ENCODE measurements at regions of chr12 and their contacts with region 1.

Region 1: GRCh38 chr12:63802012-63802608 is 22.4 kb downstream of the RXYLT1 start:
- DNase-seq: peak in 3 of 14 experiments; percentile 34 to 38 (median 37)
- ATAC-seq: no peak
- H3K4me3 ChIP-seq: no peak overlapping the region
- H3K4me3 Mint-ChIP-seq: no peak overlapping the region
- H3K27ac ChIP-seq: no peak overlapping the region
- H3K27ac Mint-ChIP-seq: no peak overlapping the region
- H3K4me1 ChIP-seq: no peaks in the 10 kb centered on the region
- H3K4me1 Mint-ChIP-seq: no peaks in the 10 kb centered on the region
- H3K27me3 ChIP-seq: no peaks in the 10 kb centered on the region
- H3K27me3 Mint-ChIP-seq: no peaks in the 10 kb centered on the region
- CTCF ChIP-seq: peak; percentile 66

Region 2: GRCh38 chr12:63103494-63104131 is 698.5 kb before region 1 on chr12:
- CTCF ChIA-PET with region 1: no interaction called
- POLR2A ChIA-PET with region 1: no interaction called
- intact Hi-C with region 1: loop called (anchors 2 to 5 kb)
- DNase-seq: peak in 4 of 14 experiments; percentile 3 to 29 (median 12)
- ATAC-seq: no peak
- H3K4me3 ChIP-seq: no peak overlapping the region
- H3K4me3 Mint-ChIP-seq: no peak overlapping the region
- H3K27ac ChIP-seq: no peak overlapping the region
- H3K27ac Mint-ChIP-seq: no peak overlapping the region
- H3K4me1 ChIP-seq: no peaks in the 10 kb centered on the region
- H3K4me1 Mint-ChIP-seq: no peaks in the 10 kb centered on the region
- H3K27me3 ChIP-seq: no peaks in the 10 kb centered on the region
- H3K27me3 Mint-ChIP-seq: peaks cover 6% of the 10 kb centered on the region
- CTCF ChIP-seq: peak; percentile 82

Region 3: DNA sequence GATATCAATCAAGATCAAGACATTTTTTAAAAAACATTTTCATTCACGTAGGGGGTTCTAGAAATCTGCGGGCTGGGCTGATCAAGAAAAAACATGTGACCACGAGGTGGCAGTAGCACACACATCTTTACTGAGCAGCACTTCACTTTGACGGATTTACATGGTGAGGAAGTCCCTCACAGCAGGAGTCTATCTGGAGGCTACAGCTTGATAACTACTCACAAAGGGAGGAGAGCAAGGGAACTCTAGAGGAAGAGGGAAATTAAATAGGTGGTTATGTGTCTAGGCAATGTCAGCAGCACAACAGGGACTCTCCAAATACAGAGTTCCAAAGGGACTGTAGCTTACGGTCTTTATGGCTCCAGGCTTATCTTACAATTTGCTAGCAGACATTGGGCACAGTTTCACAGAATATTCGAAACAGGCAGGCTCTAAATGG is 381.9 kb before region 1 on chr12:
- CTCF ChIA-PET with region 1: no interaction called
- POLR2A ChIA-PET with region 1: no interaction called
- intact Hi-C with region 1: loop called in 1 of 2 experiments (anchors 5 kb)
- DNase-seq: peak in 6 of 14 experiments; percentile 1 to 49 (median 30)
- ATAC-seq: no peak
- H3K4me3 ChIP-seq: no peak overlapping the region
- H3K4me3 Mint-ChIP-seq: no peak overlapping the region
- H3K27ac ChIP-seq: no peak overlapping the region
- H3K27ac Mint-ChIP-seq: no peak overlapping the region
- H3K4me1 ChIP-seq: no peaks in the 10 kb centered on the region
- H3K4me1 Mint-ChIP-seq: no peaks in the 10 kb centered on the region
- H3K27me3 ChIP-seq: no peaks in the 10 kb centered on the region
- H3K27me3 Mint-ChIP-seq: peaks cover 7% of the 10 kb centered on the region
- CTCF ChIP-seq: no peak

Region 4: GRCh38 chr12:63668028-63668799 is 133.9 kb before region 1 on chr12 and contains the start of gene DPY19L2:
- CTCF ChIA-PET with region 1: no interaction called
- POLR2A ChIA-PET with region 1: no interaction called
- intact Hi-C with region 1: loop called (anchors 2 to 5 kb)
- DNase-seq: peak in 7 of 14 experiments; percentile 8 to 64 (median 40)
- ATAC-seq: no peak
- H3K4me3 ChIP-seq: peak within 1 kb of the TSS; percentile 59
- H3K4me3 Mint-ChIP-seq: peak within 1 kb of the TSS; percentile 51
- H3K27ac ChIP-seq: no peak within 1 kb of the TSS
- H3K27ac Mint-ChIP-seq: no peak within 1 kb of the TSS
- H3K4me1 ChIP-seq: peaks cover 11% of the 10 kb centered on the region
- H3K4me1 Mint-ChIP-seq: peaks cover 7% of the 10 kb centered on the region
- H3K27me3 ChIP-seq: peaks cover 0 to 4% of the 10 kb centered on the region in 2 experiments
- H3K27me3 Mint-ChIP-seq: peaks cover 38% of the 10 kb centered on the region
- CTCF ChIP-seq: no peak
- total RNA-seq, gene DPY19L2: not detected

Region 5: GRCh38 chr12:64430886-64431285 is 628.8 kb after region 1 on chr12:
- CTCF ChIA-PET with region 1: no interaction called
- POLR2A ChIA-PET with region 1: no interaction called
- intact Hi-C with region 1: no loop called
- DNase-seq: no peak
- ATAC-seq: no peak
- H3K4me3 ChIP-seq: no peak overlapping the region
- H3K4me3 Mint-ChIP-seq: no peak overlapping the region
- H3K27ac ChIP-seq: no peak overlapping the region
- H3K27ac Mint-ChIP-seq: no peak overlapping the region
- H3K4me1 ChIP-seq: no peaks in the 10 kb centered on the region
- H3K4me1 Mint-ChIP-seq: no peaks in the 10 kb centered on the region
- H3K27me3 ChIP-seq: no peaks in the 10 kb centered on the region
- H3K27me3 Mint-ChIP-seq: no peaks in the 10 kb centered on the region
- CTCF ChIP-seq: no peak

Measured in CD4-positive, alpha-beta T cell (primary cell).